ENCODE measurements at regions of chr6 and their contacts with region 1.

Region 1: GRCh38 chr6:24689964-24690363 is 23.1 kb downstream of the ACOT13 start:
- DNase-seq: no peak
- ATAC-seq: no peak
- H3K4me3 ChIP-seq: no peak overlapping the region
- H3K4me3 Mint-ChIP-seq: no peak overlapping the region
- H3K27ac ChIP-seq: no peak overlapping the region
- H3K27ac Mint-ChIP-seq: no peak overlapping the region
- H3K4me1 ChIP-seq: no peaks in the 10 kb centered on the region
- H3K4me1 Mint-ChIP-seq: no peaks in the 10 kb centered on the region
- H3K27me3 ChIP-seq: no peaks in the 10 kb centered on the region
- H3K27me3 Mint-ChIP-seq: no peaks in the 10 kb centered on the region
- CTCF ChIP-seq: no peak

Region 2: GRCh38 chr6:24283043-24283985 is 406.6 kb before region 1 on chr6:
- CTCF ChIA-PET with region 1: interaction called, 3 read pairs
- POLR2A ChIA-PET with region 1: no interaction called
- intact Hi-C with region 1: loop called (anchors 5 kb)
- DNase-seq: peak; percentile 38
- ATAC-seq: peak; percentile 28
- H3K4me3 ChIP-seq: no peak overlapping the region
- H3K4me3 Mint-ChIP-seq: peak overlapping the region; percentile 4
- H3K27ac ChIP-seq: no peak overlapping the region
- H3K27ac Mint-ChIP-seq: no peak overlapping the region
- H3K4me1 ChIP-seq: peaks cover 10 to 13% of the 10 kb centered on the region in 2 donors
- H3K4me1 Mint-ChIP-seq: no peaks in the 10 kb centered on the region
- H3K27me3 ChIP-seq: peaks cover 0 to 12% (median 1%) of the 10 kb centered on the region in 4 experiments
- H3K27me3 Mint-ChIP-seq: peaks cover 11% of the 10 kb centered on the region
- CTCF ChIP-seq: peak; percentile 66

Region 3: DNA sequence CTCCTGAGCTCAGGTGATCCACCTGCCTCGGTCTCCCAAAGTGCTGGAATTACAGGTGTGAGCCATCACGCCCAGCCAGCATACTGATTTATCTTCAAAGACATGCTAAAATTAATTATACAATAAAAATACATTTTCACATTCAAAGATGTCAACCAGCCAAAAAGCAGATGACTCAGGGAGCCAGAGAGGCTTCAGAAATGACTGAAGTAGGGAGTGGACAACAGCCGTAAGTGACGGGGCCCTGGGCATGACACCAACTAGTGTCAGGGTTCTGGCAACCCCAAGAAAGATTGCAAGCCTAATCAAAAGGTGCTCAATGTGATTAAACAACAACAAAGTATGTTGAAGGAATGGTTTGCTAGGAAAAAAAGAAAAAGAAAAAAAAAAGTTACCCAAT is 229.0 kb before region 1 on chr6:
- CTCF ChIA-PET with region 1: no interaction called
- POLR2A ChIA-PET with region 1: no interaction called
- intact Hi-C with region 1: no loop called
- DNase-seq: no peak
- ATAC-seq: no peak
- H3K4me3 ChIP-seq: no peak overlapping the region
- H3K4me3 Mint-ChIP-seq: no peak overlapping the region
- H3K27ac ChIP-seq: no peak overlapping the region
- H3K27ac Mint-ChIP-seq: no peak overlapping the region
- H3K4me1 ChIP-seq: no peaks in the 10 kb centered on the region
- H3K4me1 Mint-ChIP-seq: no peaks in the 10 kb centered on the region
- H3K27me3 ChIP-seq: no peaks in the 10 kb centered on the region
- H3K27me3 Mint-ChIP-seq: no peaks in the 10 kb centered on the region
- CTCF ChIP-seq: no peak

Region 4: DNA sequence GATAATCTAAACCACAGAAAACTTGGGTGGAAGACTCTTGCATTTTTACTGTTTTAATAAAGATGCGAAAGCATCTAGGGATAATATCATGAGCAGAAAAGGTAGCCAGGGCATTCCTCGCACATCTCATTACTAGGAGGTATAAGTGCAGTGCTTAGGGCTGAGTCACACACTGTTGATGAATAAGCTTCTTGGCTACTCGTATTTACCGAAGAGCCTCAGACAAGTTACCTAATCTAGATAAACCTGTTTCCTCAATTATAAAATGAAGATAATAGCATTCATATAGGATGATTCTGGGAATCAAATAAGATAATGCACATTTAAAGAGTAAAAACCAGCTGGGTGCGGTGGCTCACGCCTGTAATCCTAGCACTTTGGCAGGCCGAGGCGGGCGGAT is 43.2 kb before region 1 on chr6:
- CTCF ChIA-PET with region 1: no interaction called
- POLR2A ChIA-PET with region 1: no interaction called
- intact Hi-C with region 1: loop called (anchors 10 kb)
- DNase-seq: no peak
- ATAC-seq: no peak
- H3K4me3 ChIP-seq: no peak overlapping the region
- H3K4me3 Mint-ChIP-seq: peak overlapping the region; percentile 95
- H3K27ac ChIP-seq: peak overlapping the region in 1 of 2 donors; percentile 75
- H3K27ac Mint-ChIP-seq: peak overlapping the region; percentile 98
- H3K4me1 ChIP-seq: peaks cover 10 to 15% of the 10 kb centered on the region in 2 donors
- H3K4me1 Mint-ChIP-seq: peaks cover 27% of the 10 kb centered on the region
- H3K27me3 ChIP-seq: no peaks in the 10 kb centered on the region
- H3K27me3 Mint-ChIP-seq: no peaks in the 10 kb centered on the region
- CTCF ChIP-seq: no peak

Region 5: GRCh38 chr6:24666641-24667377 is 23.2 kb before region 1 on chr6 and contains the starts of genes ACOT13 and TDP2:
- CTCF ChIA-PET with region 1: no interaction called
- POLR2A ChIA-PET with region 1: no interaction called
- intact Hi-C with region 1: loop called (anchors 2 kb)
- DNase-seq: peak; percentile 98
- ATAC-seq: peak; percentile 94
- H3K4me3 ChIP-seq: peak within 1 kb of the TSS; percentile 74 to 100 (median 96)
- H3K4me3 Mint-ChIP-seq: peak within 1 kb of the TSS; percentile 99
- H3K27ac ChIP-seq: peak within 1 kb of the TSS; percentile 75 to 82
- H3K27ac Mint-ChIP-seq: peak within 1 kb of the TSS; percentile 98
- H3K4me1 ChIP-seq: peaks cover 22 to 23% of the 10 kb centered on the region in 2 donors
- H3K4me1 Mint-ChIP-seq: peaks cover 46% of the 10 kb centered on the region
- H3K27me3 ChIP-seq: no peaks in the 10 kb centered on the region
- H3K27me3 Mint-ChIP-seq: no peaks in the 10 kb centered on the region
- CTCF ChIP-seq: peak; percentile 67
- total RNA-seq, gene ACOT13: 5.7 and 6.6 TPM in 2 replicates
- total RNA-seq, gene TDP2: 63.5 and 68.1 TPM in 2 replicates

Region 6: DNA sequence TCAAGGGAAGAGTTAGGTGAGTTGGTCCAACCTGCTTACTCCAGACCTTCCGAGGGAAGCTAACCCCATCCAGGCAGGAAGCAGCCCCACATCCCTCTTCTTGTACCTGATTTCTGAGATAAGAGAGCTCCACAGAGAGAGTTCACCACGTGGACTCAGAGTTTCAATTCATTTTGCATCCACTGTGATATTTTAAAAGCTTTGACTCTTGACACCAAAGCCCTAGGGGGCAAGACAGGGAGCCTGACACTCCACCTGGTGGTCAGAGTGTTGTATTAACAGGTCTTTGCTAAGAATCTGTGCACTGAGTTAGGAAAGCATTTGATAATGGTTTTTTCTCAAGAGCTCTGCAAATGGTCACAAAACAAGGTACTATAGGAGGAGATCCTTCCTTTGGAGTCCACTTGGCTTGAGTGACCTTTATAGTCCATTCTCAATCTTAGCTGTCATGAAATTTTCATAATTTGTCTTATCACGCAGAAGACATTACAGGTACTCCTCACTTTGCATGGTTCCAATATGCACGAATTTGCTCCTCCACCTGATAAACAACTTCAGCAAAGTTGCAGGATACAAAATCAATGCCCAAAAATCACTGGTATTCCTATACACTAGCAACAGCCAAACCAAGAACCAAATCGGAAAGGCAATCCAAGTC is 302.0 kb after region 1 on chr6:
- CTCF ChIA-PET with region 1: no interaction called
- POLR2A ChIA-PET with region 1: no interaction called
- intact Hi-C with region 1: no loop called
- DNase-seq: peak; percentile 88
- ATAC-seq: peak; percentile 87
- H3K4me3 ChIP-seq: peak overlapping the region in 3 of 5 experiments; percentile 13 to 27 (median 17)
- H3K4me3 Mint-ChIP-seq: peak overlapping the region; percentile 58
- H3K27ac ChIP-seq: peak overlapping the region; percentile 48 to 83
- H3K27ac Mint-ChIP-seq: peak overlapping the region; percentile 90
- H3K4me1 ChIP-seq: peaks cover 53 to 63% of the 10 kb centered on the region in 2 donors
- H3K4me1 Mint-ChIP-seq: peaks cover 75% of the 10 kb centered on the region
- H3K27me3 ChIP-seq: no peaks in the 10 kb centered on the region
- H3K27me3 Mint-ChIP-seq: no peaks in the 10 kb centered on the region
- CTCF ChIP-seq: peak; percentile 86

Measured in B cell (primary cell).